ENCODE measurements at regions of chr7 and their contacts with region 1.

Region 1: DNA sequence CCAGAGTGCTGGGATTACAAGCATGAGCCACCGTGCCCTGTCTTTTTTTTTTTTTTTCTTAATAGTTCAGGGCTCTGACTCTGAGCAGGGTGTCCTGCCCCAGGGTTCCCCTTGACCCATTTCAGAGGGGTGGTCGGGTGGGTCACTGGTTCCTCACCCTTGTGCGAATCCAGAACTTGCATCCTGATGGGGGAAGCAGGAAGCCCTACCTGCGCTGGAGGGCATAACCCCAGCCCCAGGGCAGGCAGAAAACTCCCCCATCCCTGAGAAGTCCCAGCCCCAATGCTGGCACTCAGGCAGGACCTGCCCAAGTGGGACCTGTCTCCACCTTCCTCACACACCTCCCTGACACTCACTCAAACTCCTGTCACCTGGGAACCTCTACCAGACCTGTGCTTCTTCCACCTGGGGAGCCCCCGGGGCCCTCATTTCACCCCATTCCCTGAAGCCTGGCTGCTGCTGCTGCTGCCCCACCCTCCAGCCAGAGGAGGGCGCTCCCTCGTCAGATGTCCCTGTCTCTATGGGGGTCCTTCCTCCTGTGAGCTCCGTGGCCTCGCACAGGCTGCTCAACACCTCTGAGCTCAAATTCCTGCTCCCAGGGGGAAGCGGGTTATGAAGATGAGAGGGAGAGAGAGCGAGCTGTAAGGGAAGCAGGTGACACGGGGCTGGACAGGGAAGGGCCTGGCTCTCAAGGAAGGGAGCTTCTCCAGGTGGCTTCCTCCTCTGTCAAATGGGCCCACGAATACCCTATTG is 15.1 kb upstream of the ZNF273 start:
- DNase-seq: no peak
- ATAC-seq: peak in 3 of 4 donors; percentile 38 to 47 (median 39)
- H3K4me3 ChIP-seq: peak overlapping the region; percentile 66
- H3K27ac ChIP-seq: no peak overlapping the region
- H3K4me1 ChIP-seq: peaks cover 19% of the 10 kb centered on the region
- H3K27me3 ChIP-seq: no peaks in the 10 kb centered on the region
- CTCF ChIP-seq: peak; percentile 39

Region 2: DNA sequence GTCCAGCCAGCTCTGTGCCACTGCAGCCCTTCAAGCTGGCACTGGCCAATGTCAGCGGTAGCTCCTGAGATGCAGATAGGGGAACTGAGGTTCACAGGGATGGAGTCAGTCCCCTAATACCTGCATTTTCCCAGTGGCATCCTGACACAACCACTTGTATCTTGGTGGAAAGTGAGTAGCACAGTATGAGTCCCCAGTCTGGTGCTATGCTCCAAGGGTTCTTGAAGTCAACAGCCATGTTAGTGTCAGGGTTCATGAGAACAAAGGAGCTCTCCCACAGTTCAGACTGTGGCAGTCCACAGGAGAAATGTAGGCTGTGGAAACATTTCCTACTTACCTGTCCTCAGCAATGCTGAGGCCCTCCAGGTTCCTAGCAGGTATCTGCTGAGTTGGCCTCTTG is 458.7 kb before region 1 on chr7:
- intact Hi-C with region 1: no loop called
- DNase-seq: no peak
- ATAC-seq: no peak
- H3K4me3 ChIP-seq: no peak overlapping the region
- H3K27ac ChIP-seq: no peak overlapping the region
- H3K4me1 ChIP-seq: no peaks in the 10 kb centered on the region
- H3K27me3 ChIP-seq: no peaks in the 10 kb centered on the region
- CTCF ChIP-seq: no peak

Region 3: GRCh38 chr7:64794171-64794844 is 93.6 kb before region 1 on chr7 and contains the start of gene ZNF138:
- intact Hi-C with region 1: loop called in 1 of 2 experiments (anchors 5 kb)
- DNase-seq: peak; percentile 96 to 97
- ATAC-seq: peak; percentile 100
- H3K4me3 ChIP-seq: peak within 1 kb of the TSS; percentile 87
- H3K27ac ChIP-seq: peak within 1 kb of the TSS; percentile 87
- H3K4me1 ChIP-seq: peaks cover 11% of the 10 kb centered on the region
- H3K27me3 ChIP-seq: no peaks in the 10 kb centered on the region
- CTCF ChIP-seq: no peak
- total RNA-seq, gene ZNF138: 3.9 to 9.7 (median 6.0) TPM

Region 4: GRCh38 chr7:64832136-64832535 is 55.8 kb before region 1 on chr7:
- intact Hi-C with region 1: no loop called
- DNase-seq: no peak
- ATAC-seq: no peak
- H3K4me3 ChIP-seq: no peak overlapping the region
- H3K27ac ChIP-seq: no peak overlapping the region
- H3K4me1 ChIP-seq: no peaks in the 10 kb centered on the region
- H3K27me3 ChIP-seq: no peaks in the 10 kb centered on the region
- CTCF ChIP-seq: no peak

Region 5: DNA sequence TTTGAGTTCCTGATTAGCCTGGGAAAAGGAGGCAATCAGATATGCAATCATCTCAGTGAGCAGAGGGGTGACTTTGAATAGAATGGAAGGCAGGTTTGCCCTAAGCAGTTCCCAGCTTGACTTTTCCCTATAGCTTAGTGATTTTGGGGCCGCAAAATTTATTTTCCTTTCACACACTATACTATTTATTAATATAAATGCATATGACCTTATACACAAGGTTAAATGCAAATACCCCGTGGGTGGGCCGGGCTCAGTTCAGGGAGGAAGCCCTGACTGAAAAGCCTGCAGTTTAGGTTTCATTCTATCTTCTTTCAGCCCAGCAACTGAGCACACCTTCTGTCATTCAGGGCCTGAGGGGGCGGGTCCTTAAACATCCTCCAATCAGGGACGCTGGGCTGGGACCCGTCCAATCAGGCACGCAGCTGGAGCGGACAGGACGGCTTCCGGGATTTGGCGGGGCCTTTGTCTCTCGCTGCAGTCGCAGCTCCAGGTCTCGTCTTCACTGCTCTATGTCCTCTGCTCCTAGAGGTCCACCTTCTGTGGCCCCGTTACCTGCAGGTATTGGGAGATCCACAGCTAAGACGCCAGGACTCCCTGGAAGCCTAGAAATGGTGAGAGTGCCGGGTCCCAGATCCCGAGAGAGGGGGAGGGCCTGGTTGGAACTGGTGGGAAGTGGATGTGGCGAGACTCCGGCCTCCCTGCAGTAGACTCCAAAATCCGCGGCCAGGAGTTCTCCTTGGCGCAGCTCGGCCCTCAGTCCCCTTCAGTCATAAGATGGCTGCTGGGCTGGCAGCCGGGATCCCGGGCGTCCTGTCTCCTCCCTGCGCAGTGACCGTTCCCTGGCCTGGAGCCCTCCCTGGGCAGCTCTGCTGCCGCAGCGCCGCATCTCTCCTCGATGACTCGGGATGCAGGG is 15.1 kb after region 1 on chr7 and contains the start of gene ZNF273:
- intact Hi-C with region 1: no loop called
- DNase-seq: peak; percentile 94 to 95
- ATAC-seq: peak; percentile 96 to 99 (median 98)
- H3K4me3 ChIP-seq: peak within 1 kb of the TSS; percentile 75
- H3K27ac ChIP-seq: peak within 1 kb of the TSS; percentile 72
- H3K4me1 ChIP-seq: peaks cover 12% of the 10 kb centered on the region
- H3K27me3 ChIP-seq: no peaks in the 10 kb centered on the region
- CTCF ChIP-seq: no peak
- total RNA-seq, gene ZNF273: 1.2 to 2.9 (median 1.9) TPM

Measured in psoas muscle (tissue), 8 donors.